ENCODE measurements at regions of chr4 and their contacts with region 1.

Region 1: DNA sequence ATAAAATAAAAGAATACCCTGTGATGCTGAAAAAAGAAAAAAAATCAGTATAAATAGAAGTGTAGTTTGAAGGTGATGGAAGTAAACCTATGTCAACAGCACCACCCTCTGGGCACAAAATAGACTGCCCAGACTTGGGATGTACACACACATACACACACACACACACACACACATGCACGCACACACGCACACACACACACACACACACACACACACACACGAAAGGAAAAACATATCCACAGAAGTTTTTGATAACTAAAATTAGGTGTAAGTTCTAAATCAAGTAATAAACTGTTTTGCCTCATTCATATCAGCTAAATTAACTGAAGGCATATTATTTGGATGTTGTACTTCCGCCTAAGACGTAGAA is 40.5 kb downstream of the ANXA5 start:
- DNase-seq: peak in 3 of 4 donors; percentile 37 to 79 (median 51)
- ATAC-seq: peak; percentile 96
- H3K4me3 ChIP-seq: no peak overlapping the region
- H3K27ac ChIP-seq: no peak overlapping the region
- H3K4me1 ChIP-seq: no peaks in the 10 kb centered on the region
- H3K27me3 ChIP-seq: no peaks in the 10 kb centered on the region
- CTCF ChIP-seq: peak in 1 of 2 donors; percentile 29

Region 2: GRCh38 chr4:121370729-121371325 is 285.4 kb before region 1 on chr4:
- intact Hi-C with region 1: loop called in 1 of 2 experiments (anchors 10 kb)
- DNase-seq: peak in 1 of 4 donors; percentile 59
- ATAC-seq: peak; percentile 80
- H3K4me3 ChIP-seq: no peak overlapping the region
- H3K27ac ChIP-seq: no peak overlapping the region
- H3K4me1 ChIP-seq: no peaks in the 10 kb centered on the region
- H3K27me3 ChIP-seq: peaks cover 12 to 25% of the 10 kb centered on the region in 2 donors
- CTCF ChIP-seq: peak; percentile 52 to 58

Region 3: DNA sequence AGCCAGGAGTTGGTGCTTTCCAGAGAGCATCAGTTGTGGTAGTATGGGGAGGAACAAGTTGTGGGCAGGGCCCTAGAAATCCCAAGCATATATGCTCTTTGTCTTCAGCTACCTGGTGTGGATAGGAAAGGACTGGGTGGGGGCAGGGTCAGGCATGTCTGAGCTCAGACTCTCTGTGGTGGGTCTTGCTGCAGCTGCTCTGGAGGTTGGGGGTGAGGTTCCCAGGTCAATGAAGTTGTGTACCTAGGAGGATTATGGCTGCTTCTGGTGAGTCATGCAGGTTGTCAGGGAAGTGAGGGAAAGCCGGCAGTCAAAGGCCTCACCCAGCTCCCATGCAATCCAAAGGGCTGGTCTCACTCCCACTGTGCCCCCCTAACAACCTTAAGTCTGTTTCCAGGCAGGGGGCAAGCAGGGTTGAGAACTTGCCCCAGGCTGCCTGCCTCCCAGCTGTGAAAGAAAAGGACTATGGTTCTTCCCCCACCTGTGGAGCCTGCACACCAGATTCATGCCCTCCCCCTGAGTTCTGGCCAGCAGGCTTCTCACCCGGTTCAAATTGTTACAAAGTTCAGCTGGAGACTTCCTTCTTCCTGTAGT is 245.0 kb before region 1 on chr4:
- intact Hi-C with region 1: no loop called
- DNase-seq: no peak
- ATAC-seq: no peak
- H3K4me3 ChIP-seq: no peak overlapping the region
- H3K27ac ChIP-seq: no peak overlapping the region
- H3K4me1 ChIP-seq: no peaks in the 10 kb centered on the region
- H3K27me3 ChIP-seq: no peaks in the 10 kb centered on the region
- CTCF ChIP-seq: no peak

Region 4: GRCh38 chr4:121462660-121463261 is 193.5 kb before region 1 on chr4:
- intact Hi-C with region 1: loop called in 1 of 2 experiments (anchors 10 kb)
- DNase-seq: peak in 2 of 4 donors; percentile 30 to 66
- ATAC-seq: peak; percentile 90
- H3K4me3 ChIP-seq: no peak overlapping the region
- H3K27ac ChIP-seq: no peak overlapping the region
- H3K4me1 ChIP-seq: no peaks in the 10 kb centered on the region
- H3K27me3 ChIP-seq: no peaks in the 10 kb centered on the region
- CTCF ChIP-seq: peak; percentile 45 to 60

Region 5: GRCh38 chr4:121472937-121473721 is 183.1 kb before region 1 on chr4:
- intact Hi-C with region 1: loop called (anchors 10 kb)
- DNase-seq: no peak
- ATAC-seq: no peak
- H3K4me3 ChIP-seq: no peak overlapping the region
- H3K27ac ChIP-seq: no peak overlapping the region
- H3K4me1 ChIP-seq: no peaks in the 10 kb centered on the region
- H3K27me3 ChIP-seq: no peaks in the 10 kb centered on the region
- CTCF ChIP-seq: no peak

Region 6: GRCh38 chr4:121736735-121737351 is 80.6 kb after region 1 on chr4:
- intact Hi-C with region 1: no loop called
- DNase-seq: peak in 1 of 4 donors; percentile 46
- ATAC-seq: peak; percentile 67
- H3K4me3 ChIP-seq: no peak overlapping the region
- H3K27ac ChIP-seq: no peak overlapping the region
- H3K4me1 ChIP-seq: no peaks in the 10 kb centered on the region
- H3K27me3 ChIP-seq: no peaks in the 10 kb centered on the region
- CTCF ChIP-seq: peak; percentile 4 to 44

Measured in left lung (tissue), 14 donors.